Left ventricle myocardium inferior (tissue), 1 donor: ENCODE measurements at regions of chr19 and their contacts with region 1.

Region 1: DNA sequence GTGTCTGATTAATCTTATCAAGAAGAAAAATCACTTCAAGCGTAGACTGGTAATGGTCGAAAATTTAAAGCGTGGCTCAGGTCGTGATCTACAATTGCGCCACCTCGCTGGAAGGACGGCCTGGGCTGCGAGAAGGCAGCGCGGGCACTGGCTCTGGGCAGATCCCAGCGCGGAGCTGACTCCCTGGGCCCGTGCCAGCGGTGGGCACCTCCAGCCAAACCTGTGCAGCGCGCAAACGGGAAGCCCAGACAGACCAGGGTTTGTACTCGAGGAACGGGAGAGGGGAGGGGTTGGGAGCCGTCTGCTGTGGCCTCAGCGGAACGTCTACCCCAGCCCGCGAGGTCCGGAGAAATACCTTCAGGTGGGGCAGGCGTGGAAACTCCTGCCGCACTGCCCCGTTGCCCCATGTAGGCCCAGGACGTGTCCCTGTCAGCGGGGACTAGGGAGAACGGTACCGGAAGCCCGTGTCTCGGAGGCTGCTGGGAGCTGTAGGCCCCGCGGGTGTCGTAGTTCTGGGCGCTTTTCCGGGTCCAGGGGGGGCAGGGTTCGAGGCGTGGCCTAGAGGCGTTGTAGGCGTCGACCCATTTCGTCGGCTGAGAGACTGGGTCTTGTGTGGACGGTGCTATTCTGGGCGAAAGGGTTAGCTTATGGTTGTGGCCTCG is 21.1 kb downstream of the ZNF274 start:
- DNase-seq: no peak
- H3K4me3 ChIP-seq: no peak overlapping the region
- H3K27ac ChIP-seq: no peak overlapping the region
- H3K4me1 ChIP-seq: no peaks in the 10 kb centered on the region
- H3K27me3 ChIP-seq: no peaks in the 10 kb centered on the region
- CTCF ChIP-seq: no peak

Region 2: DNA sequence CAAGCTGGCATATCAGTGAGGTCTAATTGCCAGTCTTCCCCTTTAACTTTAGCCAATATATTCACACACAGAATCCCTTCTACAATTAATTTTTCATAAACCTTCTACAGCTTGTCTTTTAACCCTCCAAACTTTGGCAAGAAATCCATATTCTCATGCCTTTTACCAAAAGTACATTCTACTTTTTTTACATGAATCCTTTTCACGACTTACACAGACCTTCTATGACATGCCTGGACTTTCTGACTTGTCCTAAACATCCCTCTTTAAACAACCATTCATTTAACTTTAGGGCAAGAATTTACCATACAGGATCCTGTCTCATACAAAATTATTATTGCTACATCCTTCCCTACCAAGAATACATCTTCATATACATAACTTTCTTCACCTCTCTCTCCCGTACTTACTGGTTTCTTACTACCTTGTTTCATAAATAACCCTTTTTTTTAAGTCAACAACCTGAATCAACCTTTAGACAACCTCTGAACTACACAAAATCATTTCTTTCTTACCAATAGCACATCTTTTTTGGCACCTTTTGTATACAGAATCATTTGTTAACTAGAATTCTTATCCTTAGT is 48.2 kb after region 1 on chr19:
- intact Hi-C with region 1: loop called (anchors 10 kb)
- DNase-seq: no peak
- H3K4me3 ChIP-seq: no peak overlapping the region
- H3K27ac ChIP-seq: no peak overlapping the region
- H3K4me1 ChIP-seq: no peaks in the 10 kb centered on the region
- H3K27me3 ChIP-seq: no peaks in the 10 kb centered on the region
- CTCF ChIP-seq: no peak